Prostate gland (tissue), 2 donors: ENCODE measurements at regions of chr1 and their contacts with region 1.

Region 1: DNA sequence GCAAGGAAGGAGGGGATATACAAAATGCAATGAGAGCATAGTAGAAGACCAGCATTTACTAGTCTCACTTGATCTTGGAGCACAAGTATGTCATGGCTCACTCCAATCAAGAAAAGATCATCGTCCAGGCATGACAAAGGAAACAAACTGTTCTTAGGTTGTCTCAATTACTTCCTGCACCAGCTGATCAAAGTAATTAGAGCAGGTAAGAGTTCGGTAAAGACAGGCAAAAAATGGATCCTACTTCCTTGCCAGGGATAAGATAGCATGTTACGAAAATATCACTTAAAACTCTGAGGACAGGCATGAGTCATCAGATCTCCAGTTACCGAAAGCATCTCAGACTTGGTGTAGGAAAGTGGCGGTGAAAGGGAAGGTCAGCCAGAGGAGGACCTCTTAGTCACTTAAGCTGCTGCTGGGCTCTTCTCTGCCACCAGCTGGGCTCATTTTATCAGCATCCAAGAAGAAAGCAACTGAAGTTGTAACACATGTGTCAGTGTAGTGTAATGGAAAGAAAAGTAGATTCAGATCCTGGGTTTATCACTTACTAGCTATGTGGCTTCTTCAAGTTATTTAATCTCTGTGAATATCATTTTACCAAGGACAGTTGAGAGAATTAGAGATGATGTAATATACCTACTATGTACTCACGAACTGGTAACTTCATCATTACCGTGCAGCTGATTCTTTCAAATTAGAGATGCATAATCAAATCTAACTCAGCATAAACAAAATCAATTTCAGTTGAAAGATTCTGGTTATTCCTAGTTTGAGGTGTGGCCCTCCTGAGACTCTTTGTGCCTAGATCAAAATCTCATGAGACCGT is 46.8 kb downstream of the XCL1 start:
- DNase-seq: no peak
- H3K4me3 ChIP-seq: no peak overlapping the region
- H3K27ac ChIP-seq: no peak overlapping the region
- H3K4me1 ChIP-seq: no peaks in the 10 kb centered on the region
- H3K27me3 ChIP-seq: no peaks in the 10 kb centered on the region
- CTCF ChIP-seq: no peak
- POLR2A ChIP-seq: no peak

Region 2: GRCh38 chr1:168452329-168452728 is 170.9 kb before region 1 on chr1:
- intact Hi-C with region 1: no loop called
- DNase-seq: no peak
- H3K4me3 ChIP-seq: no peak overlapping the region
- H3K27ac ChIP-seq: no peak overlapping the region
- H3K4me1 ChIP-seq: no peaks in the 10 kb centered on the region
- H3K27me3 ChIP-seq: no peaks in the 10 kb centered on the region
- CTCF ChIP-seq: no peak
- POLR2A ChIP-seq: no peak

Region 3: DNA sequence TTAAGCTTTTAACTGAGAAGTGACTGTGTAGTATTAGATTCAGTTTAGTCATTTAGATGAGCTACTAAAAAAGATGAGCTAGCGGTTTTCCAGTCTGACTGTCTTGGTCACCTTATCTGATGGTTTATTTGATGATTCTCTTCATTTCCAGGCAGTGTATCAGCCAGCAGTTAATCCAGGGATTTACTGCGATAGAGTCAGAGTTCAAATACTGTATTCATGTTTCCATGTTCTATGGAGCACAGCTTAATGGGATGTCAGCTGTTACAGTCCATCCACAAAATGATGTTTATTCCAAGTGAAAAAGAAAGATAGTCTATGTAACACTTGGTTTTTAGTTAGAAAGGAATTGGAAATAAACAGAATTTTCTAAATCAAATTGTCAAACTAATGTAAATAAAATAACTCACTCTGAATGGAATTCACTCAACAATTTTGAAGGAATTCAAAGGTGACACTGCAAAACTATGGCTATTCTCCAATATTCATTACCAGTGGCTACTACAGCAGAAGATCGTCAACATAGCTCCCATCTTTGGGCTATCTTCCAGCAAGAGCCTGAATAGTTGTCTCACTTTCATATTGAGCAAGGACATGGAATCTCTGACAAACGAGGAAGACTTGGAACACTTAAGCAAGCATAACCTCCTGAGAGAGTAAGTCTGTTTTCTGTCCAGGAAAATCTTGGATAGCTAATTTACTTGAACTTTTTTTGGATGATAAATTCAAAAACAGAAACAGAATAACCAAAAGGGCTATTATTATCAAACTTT is 160.4 kb after region 1 on chr1:
- intact Hi-C with region 1: loop called (anchors 5 kb)
- DNase-seq: no peak
- H3K4me3 ChIP-seq: no peak overlapping the region
- H3K27ac ChIP-seq: no peak overlapping the region
- H3K4me1 ChIP-seq: no peaks in the 10 kb centered on the region
- H3K27me3 ChIP-seq: no peaks in the 10 kb centered on the region
- CTCF ChIP-seq: no peak
- POLR2A ChIP-seq: no peak